ENCODE measurements at regions of chr11 and their contacts with region 1.

Region 1: DNA sequence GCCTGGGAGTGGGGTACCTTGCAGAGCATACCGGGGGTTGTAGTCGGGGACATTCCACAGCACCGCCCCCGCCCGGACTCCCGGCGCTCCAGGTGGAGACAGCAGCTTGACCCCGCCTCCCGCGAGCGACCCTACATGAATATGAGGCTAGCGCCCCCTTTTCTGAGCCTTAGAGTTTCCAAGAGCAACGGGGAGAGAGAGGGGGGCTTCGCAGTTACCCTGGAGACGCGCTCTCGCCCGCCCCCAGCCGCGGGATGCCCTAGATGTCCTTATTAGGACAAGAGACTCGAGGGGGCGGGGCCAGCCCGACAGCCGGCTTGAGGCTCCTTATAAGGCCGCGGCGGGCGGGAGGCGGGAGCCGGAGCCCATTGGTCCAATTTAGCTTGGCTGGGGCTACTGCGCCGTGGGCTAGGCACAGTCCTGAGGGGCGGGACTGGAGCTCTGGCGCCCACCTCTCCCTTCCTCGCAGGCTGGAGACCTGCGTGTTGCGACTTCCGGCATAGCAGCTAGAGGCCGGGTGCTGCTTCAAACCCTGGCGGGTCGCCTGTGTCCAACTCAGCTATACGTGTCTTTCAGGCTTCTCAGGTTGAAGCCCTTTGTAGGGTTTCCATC is 927 bp upstream of the MUS81 start:
- DNase-seq: peak; percentile 97 to 99
- ATAC-seq: peak; percentile 54 to 55
- H3K4me3 ChIP-seq: peak overlapping the region; percentile 88 to 98 (median 91)
- H3K27ac ChIP-seq: peak overlapping the region; percentile 95 to 99 (median 96)
- H3K4me1 ChIP-seq: peaks cover 32 to 37% of the 10 kb centered on the region in 2 donors
- H3K27me3 ChIP-seq: no peaks in the 10 kb centered on the region
- CTCF ChIP-seq: no peak
- POLR2A ChIP-seq: peak; percentile 95 to 97

Region 2: DNA sequence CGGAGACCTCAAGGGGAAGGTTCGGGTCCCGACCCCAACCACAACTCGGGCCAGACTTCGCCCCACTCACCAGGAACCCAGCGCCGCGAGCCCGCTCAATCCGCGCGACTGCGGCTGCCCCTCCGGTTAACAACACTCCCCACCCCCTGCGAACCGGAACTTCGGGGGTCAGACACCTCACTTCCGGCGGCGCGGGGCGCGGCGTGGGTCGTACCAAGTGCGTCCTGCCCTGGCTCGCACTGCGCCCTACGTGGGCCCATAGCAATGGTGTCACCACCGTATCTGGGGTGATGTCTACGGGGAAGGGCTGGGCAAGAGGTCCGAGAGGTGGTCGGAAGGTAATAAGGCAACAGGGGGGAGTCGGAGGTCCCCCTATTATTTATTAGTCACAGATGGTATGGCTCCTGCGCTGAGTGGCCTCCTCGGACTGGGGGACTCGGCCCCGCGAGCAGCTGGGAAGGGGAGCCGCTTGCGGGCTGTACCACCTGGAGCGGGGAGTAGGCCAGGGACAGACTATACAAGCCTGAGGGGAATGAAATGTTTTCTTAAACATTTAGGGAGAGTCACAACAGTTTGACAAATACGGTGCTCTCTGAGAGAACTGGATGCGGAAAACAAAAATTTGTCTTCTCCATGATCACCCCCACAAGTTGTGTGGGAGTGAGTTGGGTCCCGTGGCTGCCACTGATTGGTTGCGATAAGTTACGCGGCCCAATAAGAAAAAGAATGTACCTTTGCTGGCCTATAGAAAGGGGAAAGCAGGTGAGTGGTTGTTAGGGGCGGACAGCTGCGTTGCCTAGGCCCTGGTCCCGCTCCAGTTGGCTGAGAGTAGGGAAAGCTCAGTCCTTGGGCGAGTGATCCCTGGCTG is 724.7 kb before region 1 on chr11 and contains the start of gene SYVN1:
- in situ Hi-C with region 1: no loop called
- intact Hi-C with region 1: loop called (anchors 2 kb)
- DNase-seq: peak; percentile 96 to 99
- ATAC-seq: peak; percentile 95 to 97
- H3K4me3 ChIP-seq: peak within 1 kb of the TSS; percentile 84 to 99 (median 92)
- H3K27ac ChIP-seq: peak within 1 kb of the TSS; percentile 87 to 99 (median 98)
- H3K4me1 ChIP-seq: peaks cover 27 to 29% of the 10 kb centered on the region in 2 donors
- H3K27me3 ChIP-seq: no peaks in the 10 kb centered on the region
- CTCF ChIP-seq: peak in 1 of 5 experiments; percentile 24
- POLR2A ChIP-seq: peak; percentile 97 to 98
- total RNA-seq, gene SYVN1: 24.6 to 77.5 (median 37.3) TPM

Region 3: GRCh38 chr11:65711785-65712632 is 147.3 kb before region 1 on chr11 and contains the start of gene KAT5:
- in situ Hi-C with region 1: no loop called
- intact Hi-C with region 1: loop called (anchors 1 kb)
- DNase-seq: peak; percentile 97 to 98
- ATAC-seq: peak; percentile 92 to 94
- H3K4me3 ChIP-seq: peak within 1 kb of the TSS; percentile 73 to 97 (median 84)
- H3K27ac ChIP-seq: peak within 1 kb of the TSS; percentile 96 to 100 (median 99)
- H3K4me1 ChIP-seq: peaks cover 15 to 18% of the 10 kb centered on the region in 2 donors
- H3K27me3 ChIP-seq: no peaks in the 10 kb centered on the region
- CTCF ChIP-seq: peak; percentile 98 to 100 (median 100)
- POLR2A ChIP-seq: peak; percentile 83 to 86
- total RNA-seq, gene KAT5: 40.0 to 69.4 (median 50.0) TPM

Region 4: GRCh38 chr11:65722261-65722660 is 137.0 kb before region 1 on chr11:
- in situ Hi-C with region 1: no loop called
- intact Hi-C with region 1: no loop called
- DNase-seq: no peak
- ATAC-seq: no peak
- H3K4me3 ChIP-seq: no peak overlapping the region
- H3K27ac ChIP-seq: no peak overlapping the region
- H3K4me1 ChIP-seq: peaks cover 16 to 18% of the 10 kb centered on the region in 2 donors
- H3K27me3 ChIP-seq: no peaks in the 10 kb centered on the region
- CTCF ChIP-seq: no peak
- POLR2A ChIP-seq: no peak

Region 5: DNA sequence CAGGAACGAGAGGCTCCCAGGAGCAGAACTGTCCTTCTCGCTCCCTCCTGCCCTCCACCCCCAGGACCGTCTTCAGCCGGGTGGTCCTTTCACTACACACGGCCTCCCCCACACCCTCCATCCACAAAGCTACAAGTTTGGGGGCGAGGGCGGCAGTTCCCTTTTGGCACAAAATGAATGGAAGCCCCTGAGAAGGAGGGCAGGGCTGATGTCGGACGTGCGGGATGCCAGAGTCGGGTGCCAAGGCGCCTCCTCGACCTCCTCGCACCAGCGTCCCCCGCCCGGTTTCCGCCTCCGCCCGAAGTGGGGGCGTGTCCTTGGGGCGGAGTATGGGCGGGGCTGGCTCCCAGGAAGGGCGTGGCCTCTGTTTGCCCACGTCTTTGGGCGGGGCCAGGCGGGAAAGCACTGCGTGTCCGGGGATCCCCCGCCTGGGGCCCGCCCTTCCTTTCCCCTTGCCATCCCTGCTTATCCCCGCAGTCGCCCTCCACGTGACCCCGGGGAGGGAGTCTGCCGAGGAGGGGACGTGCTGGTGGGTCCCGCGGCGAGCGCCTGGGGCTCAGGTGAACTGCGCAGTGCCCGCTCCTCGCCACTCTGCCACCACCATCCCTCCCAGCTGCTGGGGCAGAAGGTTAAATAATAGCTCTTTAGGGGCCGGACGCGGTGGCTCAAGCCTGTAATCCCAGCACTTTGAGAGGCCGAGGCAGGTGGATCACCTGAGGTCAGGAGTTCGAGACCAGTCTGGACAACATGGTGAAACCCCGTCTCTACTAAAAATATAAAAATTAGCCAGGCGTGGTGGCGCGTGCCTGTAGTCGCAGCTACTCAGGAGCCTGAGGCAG is 14.2 kb after region 1 on chr11:
- in situ Hi-C with region 1: no loop called
- intact Hi-C with region 1: loop called (anchors 1 kb)
- DNase-seq: peak; percentile 85 to 91
- ATAC-seq: peak; percentile 84 to 89
- H3K4me3 ChIP-seq: peak overlapping the region; percentile 54 to 63 (median 60)
- H3K27ac ChIP-seq: peak overlapping the region; percentile 80 to 87 (median 82)
- H3K4me1 ChIP-seq: peaks cover 0 to 19% of the 10 kb centered on the region in 2 donors
- H3K27me3 ChIP-seq: no peaks in the 10 kb centered on the region
- CTCF ChIP-seq: no peak
- POLR2A ChIP-seq: peak; percentile 76 to 82

Region 6: DNA sequence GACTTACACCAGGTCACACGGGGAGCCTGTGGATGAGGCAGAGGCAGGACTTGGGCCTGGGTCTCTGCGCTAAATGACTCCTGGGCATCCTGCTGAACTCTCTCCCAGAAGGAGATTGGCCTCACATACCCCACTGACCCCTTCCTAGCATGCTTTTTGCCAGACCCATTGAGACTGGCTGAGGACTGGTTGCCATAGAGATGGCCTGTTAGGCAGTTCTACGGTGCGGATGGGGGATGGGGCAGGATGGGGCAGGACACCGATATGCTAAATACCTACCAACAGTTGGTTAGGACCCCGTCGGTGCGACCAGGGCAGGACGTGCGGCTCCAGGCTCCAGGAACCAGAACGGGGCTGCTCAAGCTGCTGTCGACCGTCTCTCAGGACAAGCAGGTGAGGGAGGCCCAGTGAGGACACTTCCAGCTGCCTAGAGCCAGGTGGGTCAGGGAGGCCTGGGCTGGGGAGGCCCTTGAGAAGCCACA is 86.2 kb after region 1 on chr11 and contains the start of gene TSGA10IP:
- in situ Hi-C with region 1: no loop called
- intact Hi-C with region 1: no loop called
- DNase-seq: no peak
- ATAC-seq: no peak
- H3K4me3 ChIP-seq: no peak within 1 kb of the TSS
- H3K27ac ChIP-seq: no peak within 1 kb of the TSS
- H3K4me1 ChIP-seq: no peaks in the 10 kb centered on the region
- H3K27me3 ChIP-seq: no peaks in the 10 kb centered on the region
- CTCF ChIP-seq: no peak
- POLR2A ChIP-seq: no peak
- total RNA-seq, gene TSGA10IP: not detected

Region 7: GRCh38 chr11:65961232-65961901 is 102.1 kb after region 1 on chr11 and contains the start of gene SART1:
- in situ Hi-C with region 1: no loop called
- intact Hi-C with region 1: loop called (anchors 2 kb)
- DNase-seq: peak; percentile 97 to 98
- ATAC-seq: peak; percentile 97 to 98
- H3K4me3 ChIP-seq: peak within 1 kb of the TSS; percentile 69 to 100 (median 88)
- H3K27ac ChIP-seq: peak within 1 kb of the TSS; percentile 81 to 96 (median 90)
- H3K4me1 ChIP-seq: peaks cover 16 to 24% of the 10 kb centered on the region in 2 donors
- H3K27me3 ChIP-seq: no peaks in the 10 kb centered on the region
- CTCF ChIP-seq: peak in 1 of 5 experiments; percentile 14
- POLR2A ChIP-seq: peak; percentile 61 to 81
- total RNA-seq, gene SART1: 12.0 to 55.2 (median 33.3) TPM

Region 8: DNA sequence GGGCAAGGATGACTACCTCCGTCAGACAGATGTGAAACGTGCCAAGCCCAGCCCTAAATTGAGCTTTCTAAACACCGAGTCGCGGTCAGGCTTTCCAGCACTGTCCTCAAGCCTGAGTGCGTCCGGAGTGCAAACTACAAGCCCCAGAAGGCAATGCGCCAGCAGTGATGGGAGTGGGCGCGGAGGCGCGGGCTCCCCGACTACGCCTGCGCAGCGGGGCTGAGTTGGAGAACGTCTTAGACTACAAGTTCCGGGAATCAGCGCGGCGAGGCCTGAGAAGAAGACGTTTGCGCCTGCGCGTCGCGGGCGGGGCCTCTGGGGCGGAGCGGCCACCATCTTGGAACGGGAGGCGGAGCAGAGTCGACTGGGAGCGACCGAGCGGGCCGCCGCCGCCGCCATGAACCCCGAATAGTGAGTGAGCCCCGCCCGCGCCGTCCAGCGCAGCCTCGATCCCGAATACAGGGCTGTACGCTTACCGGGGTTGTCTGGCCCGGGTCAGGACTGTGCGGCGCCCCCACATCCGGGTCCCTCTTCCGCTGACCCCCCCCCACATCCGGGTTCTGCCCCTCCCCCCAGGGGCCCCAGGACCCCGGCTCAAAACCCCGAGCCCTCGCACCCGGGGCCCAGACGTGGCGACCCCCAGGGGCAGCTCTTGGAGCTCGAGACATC is 409.1 kb after region 1 on chr11 and contains the start of gene RAB1B:
- in situ Hi-C with region 1: no loop called
- intact Hi-C with region 1: loop called (anchors 1 kb)
- DNase-seq: peak; percentile 100
- ATAC-seq: peak; percentile 84
- H3K4me3 ChIP-seq: peak within 1 kb of the TSS; percentile 79 to 99 (median 86)
- H3K27ac ChIP-seq: peak within 1 kb of the TSS; percentile 92 to 99 (median 96)
- H3K4me1 ChIP-seq: peaks cover 19 to 27% of the 10 kb centered on the region in 2 donors
- H3K27me3 ChIP-seq: no peaks in the 10 kb centered on the region
- CTCF ChIP-seq: no peak
- POLR2A ChIP-seq: peak in 1 of 2 donors; percentile 67
- total RNA-seq, gene RAB1B: 96.0 to 194 (median 130) TPM

Measured in gastrocnemius medialis (tissue), 4 donors.